HEK293T (cell line): ENCODE measurements at regions of chr1 and their contacts with region 1.

Region 1: DNA sequence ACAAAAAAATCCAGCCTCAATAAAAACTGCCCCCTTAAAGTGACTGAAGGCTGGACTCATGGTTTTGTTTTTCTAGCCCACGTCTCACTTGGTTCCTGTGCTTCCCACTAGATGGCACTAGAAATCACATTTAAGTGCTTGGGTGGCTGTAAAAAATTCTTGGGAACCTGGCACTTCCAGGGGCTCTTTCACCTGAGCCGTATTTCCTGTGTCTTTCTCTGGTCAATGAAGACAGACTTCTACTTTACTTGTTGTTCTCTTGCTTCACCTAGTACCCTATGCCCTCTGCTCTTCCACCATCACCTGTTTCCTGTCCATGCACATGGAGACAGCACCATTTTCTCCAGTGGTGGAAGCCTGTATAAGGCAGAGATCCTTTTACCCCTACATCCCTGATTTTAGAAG is 20.0 kb downstream of the METTL13 start:
- DNase-seq: peak; percentile 72

Region 2: DNA sequence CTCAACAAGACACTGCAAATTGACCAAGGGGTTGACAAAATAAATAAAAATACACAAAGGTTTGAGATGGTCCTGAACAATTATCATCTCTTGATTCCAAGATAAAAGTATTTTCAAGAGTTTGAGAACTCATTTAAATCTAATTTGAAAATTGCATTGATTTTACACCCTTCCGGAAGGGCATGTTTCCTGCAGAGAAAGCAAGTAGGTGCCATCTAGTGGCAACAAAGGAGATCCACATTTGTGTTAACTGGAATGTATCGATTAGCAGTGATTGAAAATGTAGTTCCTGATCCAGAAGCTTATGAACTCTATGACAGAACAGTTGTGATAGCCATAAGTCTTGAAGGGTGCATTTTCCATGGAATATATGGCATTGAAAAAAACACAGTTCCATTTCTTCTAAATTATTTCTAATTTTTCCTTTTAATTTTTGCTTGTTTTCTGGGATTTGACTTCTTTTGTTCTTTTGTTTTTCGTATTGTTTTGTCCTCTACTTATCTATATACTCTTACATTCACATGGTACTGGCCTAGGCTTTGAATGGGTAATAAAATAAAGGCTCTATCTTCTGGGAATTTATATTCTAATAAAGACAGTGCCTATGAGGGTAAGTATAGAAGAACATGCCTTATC is 183.5 kb after region 1 on chr1:
- CTCF ChIA-PET with region 1: interaction called, 82 read pairs
- POLR2A ChIA-PET with region 1: no interaction called
- DNase-seq: peak; percentile 45